AG04450 (cell line): ENCODE measurements at regions of chr9 and their contacts with region 1.

Region 1: GRCh38 chr9:68584189-68585033 is 43.7 kb upstream of the TMEM252 start:
- DNase-seq: peak; percentile 71
- H3K4me3 ChIP-seq: no peak overlapping the region
- H3K27ac ChIP-seq: no peak overlapping the region
- H3K27me3 ChIP-seq: peaks cover 3% of the 10 kb centered on the region
- CTCF ChIP-seq: peak; percentile 100

Region 2: GRCh38 chr9:68507806-68508145 is 76.6 kb before region 1 on chr9:
- CTCF ChIA-PET with region 1: interaction called, 11 read pairs
- POLR2A ChIA-PET with region 1: no interaction called
- DNase-seq: no peak
- H3K4me3 ChIP-seq: no peak overlapping the region
- H3K27ac ChIP-seq: no peak overlapping the region
- H3K27me3 ChIP-seq: no peaks in the 10 kb centered on the region
- CTCF ChIP-seq: no peak

Region 3: GRCh38 chr9:68560071-68560844 is 24.2 kb before region 1 on chr9:
- CTCF ChIA-PET with region 1: interaction called, 20 read pairs
- POLR2A ChIA-PET with region 1: no interaction called
- DNase-seq: peak; percentile 39
- H3K4me3 ChIP-seq: no peak overlapping the region
- H3K27ac ChIP-seq: peak overlapping the region; percentile 77
- H3K27me3 ChIP-seq: no peaks in the 10 kb centered on the region
- CTCF ChIP-seq: peak; percentile 46

Region 4: GRCh38 chr9:68574150-68574549 is 10.3 kb before region 1 on chr9:
- CTCF ChIA-PET with region 1: interaction called, 23 read pairs
- POLR2A ChIA-PET with region 1: no interaction called
- DNase-seq: no peak
- H3K4me3 ChIP-seq: no peak overlapping the region
- H3K27ac ChIP-seq: no peak overlapping the region
- H3K27me3 ChIP-seq: peaks cover 3% of the 10 kb centered on the region
- CTCF ChIP-seq: peak; percentile 23

Region 5: DNA sequence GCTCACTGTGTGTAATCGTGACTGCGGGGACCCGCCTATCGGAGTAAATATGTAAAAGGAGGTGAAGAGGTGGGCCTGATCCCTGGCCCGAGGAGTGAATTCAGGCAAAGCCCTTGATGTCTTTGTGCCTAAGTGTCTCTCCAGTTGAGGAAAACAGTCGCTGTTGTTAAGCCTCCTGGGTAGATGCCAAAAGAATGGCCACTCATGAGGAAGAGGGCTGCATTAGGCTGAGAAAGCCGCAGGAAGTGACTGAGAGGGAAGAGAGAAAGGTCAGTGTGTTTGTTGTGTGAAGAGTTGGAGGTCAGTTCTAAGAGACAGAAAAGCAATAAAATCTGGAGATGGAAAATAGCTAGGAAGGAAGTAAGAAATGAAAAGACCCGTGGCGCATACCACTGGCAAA is 84.8 kb after region 1 on chr9:
- CTCF ChIA-PET with region 1: no interaction called
- POLR2A ChIA-PET with region 1: no interaction called
- DNase-seq: no peak
- H3K4me3 ChIP-seq: no peak overlapping the region
- H3K27ac ChIP-seq: no peak overlapping the region
- H3K27me3 ChIP-seq: no peaks in the 10 kb centered on the region
- CTCF ChIP-seq: no peak

Region 6: DNA sequence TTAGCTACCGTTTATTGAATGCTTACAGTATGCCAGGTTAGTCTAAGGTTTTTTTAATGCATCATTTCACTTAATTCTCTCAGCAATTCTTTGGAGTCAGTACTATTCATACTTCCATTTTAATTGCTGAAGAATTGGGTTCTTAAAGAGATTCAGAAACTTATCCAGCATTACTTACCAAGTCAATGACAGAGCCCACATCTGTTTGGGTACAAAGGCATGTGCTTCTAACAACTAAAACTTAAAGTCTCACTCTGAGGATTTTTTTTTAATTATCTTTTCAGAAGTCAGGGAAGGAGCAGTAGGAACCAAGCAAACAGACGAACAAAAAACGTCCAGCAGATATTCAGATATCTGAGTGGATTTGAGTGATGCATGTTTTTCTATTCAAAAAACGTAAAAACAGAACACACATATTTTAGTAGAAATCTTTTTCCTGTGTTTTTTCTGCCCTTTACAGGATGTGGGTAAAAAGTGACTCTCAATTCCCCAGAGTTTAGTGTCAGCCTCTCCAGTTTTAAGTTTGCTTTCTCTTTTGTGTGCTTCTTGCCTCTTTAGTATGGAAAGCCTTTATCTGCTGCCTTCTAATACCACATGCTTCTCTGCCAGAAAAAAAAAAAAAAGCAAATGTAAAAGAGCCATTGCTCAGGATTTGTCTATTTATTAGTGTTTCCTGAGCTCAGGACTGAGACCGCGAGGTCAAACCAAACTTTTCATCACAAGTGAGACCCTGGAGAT is 311.5 kb after region 1 on chr9:
- CTCF ChIA-PET with region 1: no interaction called
- POLR2A ChIA-PET with region 1: no interaction called
- DNase-seq: no peak
- H3K4me3 ChIP-seq: no peak overlapping the region
- H3K27ac ChIP-seq: no peak overlapping the region
- H3K27me3 ChIP-seq: no peaks in the 10 kb centered on the region
- CTCF ChIP-seq: no peak

Region 7: GRCh38 chr9:68999393-69000105 is 415.1 kb after region 1 on chr9:
- CTCF ChIA-PET with region 1: interaction called, 18 read pairs
- POLR2A ChIA-PET with region 1: no interaction called
- DNase-seq: peak; percentile 24
- H3K4me3 ChIP-seq: no peak overlapping the region
- H3K27ac ChIP-seq: no peak overlapping the region
- H3K27me3 ChIP-seq: peaks cover 6% of the 10 kb centered on the region
- CTCF ChIP-seq: peak; percentile 90